H1 (cell line): ENCODE measurements at regions of chr12 and their contacts with region 1.

Region 1: DNA sequence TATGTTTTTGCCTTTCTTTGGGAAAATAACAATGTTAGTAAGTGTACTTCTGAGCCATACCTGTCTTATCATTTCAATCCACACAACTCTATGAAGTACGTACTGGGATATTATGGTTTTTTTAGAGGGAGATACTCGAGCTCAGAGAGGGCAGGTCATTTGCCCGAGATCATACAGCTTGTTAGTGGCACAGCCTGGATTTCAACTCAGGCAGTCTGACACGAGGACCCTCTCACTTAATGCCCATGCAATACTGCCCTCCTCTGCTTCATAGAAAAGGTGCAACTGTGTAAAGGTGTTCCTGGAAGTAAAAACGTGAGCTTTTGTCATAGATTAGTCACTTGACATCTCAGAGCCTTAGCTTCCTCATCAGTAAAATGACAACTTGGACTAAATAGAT is 128.0 kb downstream of the NDUFA12 start:
- DNase-seq: no peak
- H3K4me3 ChIP-seq: no peak overlapping the region
- H3K27ac ChIP-seq: no peak overlapping the region
- H3K4me1 ChIP-seq: peaks cover 0 to 4% (median 3%) of the 10 kb centered on the region in 4 experiments; a peak in 6 of 7 replicates
- H3K27me3 ChIP-seq: peaks cover 13 to 46% (median 38%) of the 10 kb centered on the region in 4 experiments
- CTCF ChIP-seq: peak; percentile 16 to 79 (median 67)
- EP300 ChIP-seq: no peak
- POLR2A ChIP-seq: no peak
- RAD21 ChIP-seq: peak; percentile 86 to 89

Region 2: DNA sequence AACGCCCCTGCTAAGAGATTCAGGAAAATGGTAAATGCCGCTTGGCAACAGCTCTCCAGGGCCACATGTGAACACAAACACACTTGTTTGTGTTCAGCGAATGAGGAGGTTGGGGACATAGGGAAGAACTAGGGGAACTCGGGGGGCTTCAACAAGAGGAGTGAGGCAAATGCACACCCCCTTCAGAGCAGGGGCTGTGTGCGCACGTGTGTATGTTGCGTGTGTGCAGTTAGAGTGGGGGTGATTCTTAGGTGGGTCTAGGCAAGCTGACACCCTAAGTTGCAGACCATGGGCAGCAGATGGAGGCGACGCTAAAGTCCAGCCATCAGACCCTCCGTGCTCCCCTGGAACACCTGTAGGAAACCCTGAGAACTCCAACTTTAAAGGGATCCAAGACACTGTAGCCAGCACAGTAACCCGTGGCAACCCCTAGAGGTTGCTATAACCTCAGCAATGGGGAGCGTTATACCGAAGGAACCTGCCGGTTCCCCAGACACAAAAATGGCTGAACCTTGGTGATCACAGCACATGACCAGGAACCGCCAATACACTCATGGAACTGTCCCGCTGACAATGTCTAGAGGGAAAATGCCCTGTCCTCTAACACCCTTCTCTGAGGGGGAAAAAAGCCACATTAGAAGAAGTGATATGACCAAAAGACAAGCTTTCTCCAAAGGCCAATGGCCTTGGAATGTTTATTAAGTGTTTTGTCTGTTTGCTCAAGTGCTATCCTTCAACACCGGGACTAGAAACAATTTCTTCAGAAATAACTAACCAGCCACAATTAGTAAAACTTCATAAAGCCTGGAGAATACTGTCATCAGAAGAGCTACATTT is 329.4 kb before region 1 on chr12:
- CTCF ChIA-PET with region 1: interaction called, 21 read pairs
- POLR2A ChIA-PET with region 1: no interaction called
- DNase-seq: peak; percentile 47 to 59
- H3K4me3 ChIP-seq: no peak overlapping the region
- H3K27ac ChIP-seq: no peak overlapping the region
- H3K4me1 ChIP-seq: no peaks in the 10 kb centered on the region; a peak in 1 of 7 replicates
- H3K27me3 ChIP-seq: peaks cover 0 to 2% (median 0%) of the 10 kb centered on the region in 4 experiments; a peak in 1 of 7 replicates
- CTCF ChIP-seq: peak; percentile 61 to 95 (median 92)
- EP300 ChIP-seq: no peak
- POLR2A ChIP-seq: no peak
- RAD21 ChIP-seq: peak; percentile 98 to 99

Region 3: GRCh38 chr12:94762259-94762942 is 113.1 kb before region 1 on chr12:
- CTCF ChIA-PET with region 1: interaction called, 10 read pairs
- POLR2A ChIA-PET with region 1: interaction called, 3 read pairs
- DNase-seq: no peak
- H3K4me3 ChIP-seq: no peak overlapping the region
- H3K27ac ChIP-seq: no peak overlapping the region
- H3K4me1 ChIP-seq: no peaks in the 10 kb centered on the region
- H3K27me3 ChIP-seq: no peaks in the 10 kb centered on the region; a peak in 1 of 7 replicates
- CTCF ChIP-seq: no peak
- EP300 ChIP-seq: no peak
- POLR2A ChIP-seq: no peak
- RAD21 ChIP-seq: no peak

Region 4: DNA sequence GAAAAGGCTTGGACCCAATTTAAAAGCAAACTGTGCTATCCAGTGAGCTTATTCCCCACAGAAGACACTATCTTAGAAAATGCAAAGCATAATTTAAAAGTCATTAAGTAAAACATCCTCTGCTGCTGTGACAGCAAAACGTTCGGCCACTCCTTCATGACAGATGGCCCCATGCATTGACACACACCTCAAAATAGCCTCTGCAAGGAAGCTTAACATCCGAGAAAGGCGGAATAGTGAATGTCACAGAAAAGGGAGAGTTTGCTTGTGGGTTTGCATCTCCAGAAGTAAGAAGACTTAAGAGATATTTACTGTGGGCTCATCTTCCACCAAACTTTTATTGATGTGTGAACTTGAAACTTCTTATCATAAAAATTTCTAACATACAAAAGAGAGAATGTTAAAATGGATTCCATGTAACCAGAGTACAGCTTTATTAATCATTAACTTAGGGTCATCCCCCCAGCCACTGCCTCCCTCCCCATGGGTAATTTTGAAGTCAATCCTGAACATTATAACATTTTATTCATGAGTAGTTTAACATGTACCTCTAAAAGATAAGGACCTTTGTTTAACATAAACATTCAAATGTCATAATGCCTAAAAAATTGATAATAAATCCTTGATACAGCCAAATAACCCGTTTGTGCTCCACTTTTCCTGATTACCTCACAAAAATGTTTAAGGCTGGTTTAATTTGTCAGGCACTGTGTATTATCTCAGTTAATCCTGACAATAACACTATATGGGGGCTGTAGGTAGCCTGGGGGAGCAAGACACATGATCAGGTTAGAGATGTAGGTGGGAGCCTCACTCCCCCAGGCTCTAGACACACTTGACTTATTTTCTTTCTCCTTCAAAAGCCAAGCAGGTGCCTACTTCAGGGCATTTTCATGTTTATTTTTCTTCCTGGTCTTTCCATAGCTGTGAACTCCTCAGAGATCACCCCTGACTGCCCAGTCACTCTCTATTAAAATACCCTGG is 105.5 kb before region 1 on chr12:
- CTCF ChIA-PET with region 1: interaction called, 21 read pairs
- POLR2A ChIA-PET with region 1: no interaction called
- DNase-seq: no peak
- H3K4me3 ChIP-seq: no peak overlapping the region
- H3K27ac ChIP-seq: no peak overlapping the region
- H3K4me1 ChIP-seq: peaks cover 0 to 4% (median 3%) of the 10 kb centered on the region in 4 experiments; a peak in 3 of 7 replicates
- H3K27me3 ChIP-seq: no peaks in the 10 kb centered on the region; a peak in 1 of 7 replicates
- CTCF ChIP-seq: no peak
- EP300 ChIP-seq: no peak
- POLR2A ChIP-seq: no peak
- RAD21 ChIP-seq: no peak

Region 5: GRCh38 chr12:94863321-94864035 is 12.0 kb before region 1 on chr12:
- CTCF ChIA-PET with region 1: interaction called, 14 read pairs
- POLR2A ChIA-PET with region 1: no interaction called
- DNase-seq: no peak
- H3K4me3 ChIP-seq: no peak overlapping the region
- H3K27ac ChIP-seq: no peak overlapping the region
- H3K4me1 ChIP-seq: no peaks in the 10 kb centered on the region
- H3K27me3 ChIP-seq: no peaks in the 10 kb centered on the region
- CTCF ChIP-seq: no peak
- EP300 ChIP-seq: no peak
- POLR2A ChIP-seq: no peak
- RAD21 ChIP-seq: no peak

Region 6: GRCh38 chr12:94898388-94898787 is 22.9 kb after region 1 on chr12:
- CTCF ChIA-PET with region 1: interaction called, 11 read pairs
- POLR2A ChIA-PET with region 1: no interaction called
- DNase-seq: no peak
- H3K4me3 ChIP-seq: no peak overlapping the region
- H3K27ac ChIP-seq: no peak overlapping the region
- H3K4me1 ChIP-seq: no peaks in the 10 kb centered on the region
- H3K27me3 ChIP-seq: no peaks in the 10 kb centered on the region
- CTCF ChIP-seq: peak; percentile 43 to 58 (median 56)
- EP300 ChIP-seq: no peak
- POLR2A ChIP-seq: no peak
- RAD21 ChIP-seq: peak; percentile 69 to 76